ENCODE measurements at regions of chr14 and their contacts with region 1.

Region 1: DNA sequence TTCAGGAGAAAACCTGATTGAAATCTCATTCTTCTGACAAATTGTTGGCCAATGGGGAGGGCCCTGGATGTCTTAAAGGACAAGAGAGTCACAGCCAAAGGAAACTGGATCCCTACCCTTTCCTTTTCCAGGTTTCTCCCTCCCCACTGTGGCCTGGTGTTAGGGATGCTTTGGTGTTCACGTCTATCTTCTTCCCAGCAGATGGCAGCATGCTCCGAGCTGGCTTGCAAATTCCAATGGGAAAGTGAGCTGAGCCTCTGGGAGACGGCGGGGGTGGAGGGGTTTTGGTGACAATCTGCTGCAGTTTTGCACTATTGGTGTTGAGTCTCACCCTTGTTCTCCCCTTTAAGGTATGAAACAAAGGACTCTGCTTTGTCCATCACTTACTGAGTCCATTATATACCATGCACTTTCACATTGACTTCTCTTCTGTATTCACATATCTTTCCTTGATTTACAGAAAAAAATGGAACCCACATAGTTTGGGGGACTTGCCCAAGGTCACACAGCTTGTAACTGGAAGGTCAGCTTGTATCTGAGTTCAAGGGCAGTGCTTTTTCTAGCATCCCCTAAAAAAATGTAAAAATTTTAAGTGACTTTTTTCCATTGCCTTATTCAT is 39.3 kb downstream of the CCDC177 start:
- DNase-seq: peak; percentile 87

Region 2: GRCh38 chr14:69547701-69548348 is 12.5 kb after region 1 on chr14:
- CTCF ChIA-PET with region 1: interaction called, 15 read pairs
- POLR2A ChIA-PET with region 1: no interaction called
- DNase-seq: peak; percentile 44